ENCODE measurements at regions of chr5 and their contacts with region 1.

Region 1: GRCh38 chr5:151432210-151432609 is 15.2 kb upstream of the SLC36A1 start:
- DNase-seq: no peak
- ATAC-seq: no peak
- H3K4me3 ChIP-seq: peak overlapping the region in 1 of 4 donors; percentile 18
- H3K27ac ChIP-seq: peak overlapping the region; percentile 77 to 87 (median 84)
- H3K4me1 ChIP-seq: peaks cover 32 to 37% of the 10 kb centered on the region in 2 donors
- H3K27me3 ChIP-seq: no peaks in the 10 kb centered on the region
- CTCF ChIP-seq: no peak
- POLR2A ChIP-seq: no peak

Region 2: DNA sequence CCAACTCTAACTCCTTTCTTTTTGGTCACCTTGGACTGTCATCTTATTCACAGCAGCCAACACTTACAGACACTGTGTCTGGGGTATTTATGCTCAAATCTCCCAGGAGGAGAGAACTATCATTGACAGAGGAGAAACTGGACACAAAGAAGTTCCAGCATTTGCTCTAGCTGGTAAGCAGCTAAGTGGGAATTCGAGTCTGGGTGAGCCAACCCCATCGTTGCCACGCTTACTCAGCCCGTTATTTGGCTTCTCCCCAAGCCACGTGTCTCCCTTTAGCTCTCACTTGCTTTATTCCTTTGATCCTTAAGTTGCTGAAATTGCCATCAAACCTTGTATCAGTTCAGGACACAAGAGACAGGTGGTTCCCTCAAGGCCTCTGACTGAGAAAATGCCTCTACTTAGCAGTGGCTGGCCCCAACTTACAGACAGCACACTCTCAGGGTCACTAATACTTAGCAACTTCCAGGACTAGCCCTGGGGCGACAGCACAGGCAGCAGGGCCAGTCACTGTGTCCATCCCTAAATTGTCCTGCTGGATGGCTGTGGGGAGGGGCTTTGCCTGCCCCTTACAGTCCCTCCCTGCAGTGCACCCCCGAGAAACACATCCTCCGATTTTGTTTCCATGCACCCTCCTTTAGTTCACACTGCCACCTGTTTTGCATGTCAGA is 86.3 kb before region 1 on chr5:
- in situ Hi-C with region 1: no loop called
- intact Hi-C with region 1: loop called (anchors 5 kb)
- DNase-seq: peak; percentile 63 to 79
- ATAC-seq: peak; percentile 57 to 60
- H3K4me3 ChIP-seq: peak overlapping the region; percentile 50 to 63 (median 54)
- H3K27ac ChIP-seq: peak overlapping the region; percentile 92 to 96 (median 94)
- H3K4me1 ChIP-seq: peaks cover 49 to 50% of the 10 kb centered on the region in 2 donors
- H3K27me3 ChIP-seq: no peaks in the 10 kb centered on the region
- CTCF ChIP-seq: no peak
- POLR2A ChIP-seq: no peak

Region 3: DNA sequence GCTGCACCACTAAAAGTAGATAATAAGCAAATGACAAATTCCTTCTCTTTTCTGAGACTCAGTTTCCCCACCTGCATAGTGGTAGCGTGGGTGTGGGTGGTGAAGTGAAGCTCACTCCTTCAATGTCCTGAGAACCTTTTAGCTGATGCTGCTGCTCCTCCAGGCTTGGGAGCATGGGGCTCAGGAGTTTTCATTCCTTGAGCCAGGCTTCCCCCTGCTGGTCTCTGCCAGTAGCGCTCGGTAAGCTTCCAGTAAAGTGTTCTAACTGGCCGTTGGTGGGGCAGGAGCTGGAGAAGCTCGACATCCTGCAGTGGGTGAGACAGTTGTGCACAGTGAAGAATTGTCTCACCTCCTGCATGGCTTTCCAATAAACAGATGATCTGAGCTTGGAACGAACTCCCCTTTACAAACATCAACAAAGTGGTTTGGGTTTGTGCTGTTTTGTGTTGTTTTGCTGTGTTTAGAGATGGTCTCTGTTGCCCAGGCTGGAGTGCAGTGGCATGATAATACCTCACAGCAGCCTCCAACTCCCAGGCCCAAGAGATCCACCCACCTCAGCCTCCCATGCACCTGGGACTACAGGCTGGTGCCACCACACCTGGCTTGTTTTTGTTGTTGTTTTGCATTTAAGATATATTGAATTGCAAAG is 219.9 kb after region 1 on chr5:
- in situ Hi-C with region 1: loop called in 1 of 4 experiments (anchors 10 kb)
- intact Hi-C with region 1: no loop called
- DNase-seq: peak; percentile 60 to 71
- ATAC-seq: peak; percentile 93 to 99
- H3K4me3 ChIP-seq: no peak overlapping the region
- H3K27ac ChIP-seq: no peak overlapping the region
- H3K4me1 ChIP-seq: no peaks in the 10 kb centered on the region
- H3K27me3 ChIP-seq: no peaks in the 10 kb centered on the region
- CTCF ChIP-seq: peak; percentile 79 to 90 (median 83)
- POLR2A ChIP-seq: no peak

Measured in gastrocnemius medialis (tissue), 4 donors.